B cell (primary cell): ENCODE measurements at regions of chr4 and their contacts with region 1.

Region 1: DNA sequence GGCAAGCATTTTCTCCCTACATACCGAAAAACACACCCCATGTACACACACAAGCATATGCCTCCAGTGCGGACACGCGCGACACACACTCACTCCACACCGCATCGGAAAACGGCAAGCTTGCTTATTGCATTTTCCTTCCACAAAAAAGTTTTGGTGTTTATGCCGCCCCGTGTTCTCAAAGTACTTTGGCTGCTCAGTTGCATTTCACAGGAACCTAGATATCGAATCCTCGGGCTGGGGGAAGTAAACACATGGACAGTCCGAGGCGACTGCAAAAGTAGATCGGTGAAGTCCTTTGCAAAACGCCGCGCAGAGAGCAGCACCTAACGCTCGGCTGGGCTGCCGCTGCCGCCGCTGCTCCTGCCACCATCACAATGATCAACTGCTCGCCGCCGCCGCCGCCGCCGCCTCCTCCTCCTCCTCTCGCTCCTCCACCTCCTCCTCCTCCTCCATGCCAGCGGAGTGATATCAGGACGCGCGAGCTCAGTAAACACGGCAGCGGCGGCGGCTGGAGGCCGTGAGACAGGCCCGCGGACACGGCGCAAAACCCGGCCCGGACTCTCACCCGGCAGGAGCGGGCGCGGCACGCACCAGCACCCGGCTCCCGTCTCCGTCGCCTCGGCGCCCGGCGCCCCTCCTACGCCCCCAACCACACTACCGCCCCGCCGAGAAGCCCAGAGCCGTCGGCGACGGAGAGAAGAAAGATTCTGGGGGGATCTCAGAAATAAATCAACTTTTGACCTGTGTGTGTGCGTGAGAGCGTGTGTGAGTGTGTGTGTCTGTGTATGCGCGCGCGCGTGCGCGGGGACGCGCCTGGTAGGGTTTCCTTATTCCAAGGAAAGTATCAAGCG is at the start of gene MAML3:
- DNase-seq: peak; percentile 82
- ATAC-seq: peak; percentile 18
- H3K4me3 ChIP-seq: peak within 1 kb of the TSS; percentile 54 to 88 (median 79)
- H3K4me3 Mint-ChIP-seq: peak within 1 kb of the TSS; percentile 91
- H3K27ac ChIP-seq: no peak within 1 kb of the TSS
- H3K27ac Mint-ChIP-seq: peak within 1 kb of the TSS; percentile 82
- H3K4me1 ChIP-seq: peaks cover 48 to 68% of the 10 kb centered on the region in 2 donors
- H3K4me1 Mint-ChIP-seq: peaks cover 58% of the 10 kb centered on the region
- H3K27me3 ChIP-seq: peaks cover 0 to 72% (median 28%) of the 10 kb centered on the region in 4 experiments
- H3K27me3 Mint-ChIP-seq: peaks cover 53% of the 10 kb centered on the region
- CTCF ChIP-seq: no peak
- total RNA-seq, gene MAML3: 5.3 and 6.1 TPM in 2 replicates

Region 2: GRCh38 chr4:139083956-139084803 is 1069.8 kb before region 1 on chr4:
- CTCF ChIA-PET with region 1: no interaction called
- POLR2A ChIA-PET with region 1: no interaction called
- intact Hi-C with region 1: loop called (anchors 5 kb)
- DNase-seq: peak; percentile 92
- ATAC-seq: peak; percentile 62
- H3K4me3 ChIP-seq: peak overlapping the region; percentile 79 to 98 (median 97)
- H3K4me3 Mint-ChIP-seq: peak overlapping the region; percentile 87
- H3K27ac ChIP-seq: peak overlapping the region; percentile 89 to 93
- H3K27ac Mint-ChIP-seq: peak overlapping the region; percentile 94
- H3K4me1 ChIP-seq: peaks cover 14 to 23% of the 10 kb centered on the region in 2 donors
- H3K4me1 Mint-ChIP-seq: peaks cover 36% of the 10 kb centered on the region
- H3K27me3 ChIP-seq: no peaks in the 10 kb centered on the region
- H3K27me3 Mint-ChIP-seq: no peaks in the 10 kb centered on the region
- CTCF ChIP-seq: peak; percentile 42

Region 3: DNA sequence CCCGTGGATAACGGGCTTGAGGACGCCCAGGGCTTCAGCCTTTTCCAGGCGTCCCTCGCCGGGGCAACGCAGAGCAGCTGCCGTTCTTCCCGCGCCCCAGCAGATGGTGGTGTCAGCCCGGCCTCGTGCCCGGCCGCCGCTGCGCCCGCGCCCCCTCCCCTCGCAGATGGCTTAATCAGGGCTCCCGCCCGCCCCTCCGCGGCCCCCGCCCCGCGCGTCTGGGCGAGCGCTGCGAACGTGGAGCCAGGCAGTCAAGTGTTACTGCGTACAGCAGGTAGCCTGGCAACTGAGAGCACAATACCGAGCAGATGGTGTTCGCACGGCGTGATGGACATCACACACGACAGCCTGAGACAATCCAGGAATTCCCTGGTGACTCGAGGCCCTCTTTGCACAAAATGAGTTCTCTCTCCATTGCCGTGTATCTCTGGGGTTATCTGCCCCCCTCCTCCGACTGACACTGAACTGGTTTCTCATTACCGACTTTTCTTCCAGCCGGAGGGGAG is 419.0 kb before region 1 on chr4:
- CTCF ChIA-PET with region 1: no interaction called
- POLR2A ChIA-PET with region 1: no interaction called
- intact Hi-C with region 1: loop called (anchors 2 kb)
- DNase-seq: peak; percentile 86
- ATAC-seq: peak; percentile 84
- H3K4me3 ChIP-seq: peak overlapping the region; percentile 33 to 78 (median 51)
- H3K4me3 Mint-ChIP-seq: peak overlapping the region; percentile 86
- H3K27ac ChIP-seq: peak overlapping the region in 1 of 2 donors; percentile 48
- H3K27ac Mint-ChIP-seq: no peak overlapping the region
- H3K4me1 ChIP-seq: peaks cover 17 to 23% of the 10 kb centered on the region in 2 donors
- H3K4me1 Mint-ChIP-seq: peaks cover 17% of the 10 kb centered on the region
- H3K27me3 ChIP-seq: peaks cover 0 to 27% (median 19%) of the 10 kb centered on the region in 4 experiments
- H3K27me3 Mint-ChIP-seq: peaks cover 35% of the 10 kb centered on the region
- CTCF ChIP-seq: peak; percentile 72

Region 4: GRCh38 chr4:139783741-139784484 is 370.0 kb before region 1 on chr4:
- CTCF ChIA-PET with region 1: no interaction called
- POLR2A ChIA-PET with region 1: no interaction called
- intact Hi-C with region 1: no loop called
- DNase-seq: no peak
- ATAC-seq: no peak
- H3K4me3 ChIP-seq: no peak overlapping the region
- H3K4me3 Mint-ChIP-seq: no peak overlapping the region
- H3K27ac ChIP-seq: no peak overlapping the region
- H3K27ac Mint-ChIP-seq: no peak overlapping the region
- H3K4me1 ChIP-seq: no peaks in the 10 kb centered on the region
- H3K4me1 Mint-ChIP-seq: peaks cover 5% of the 10 kb centered on the region
- H3K27me3 ChIP-seq: peaks cover 0 to 3% (median 0%) of the 10 kb centered on the region in 4 experiments
- H3K27me3 Mint-ChIP-seq: peaks cover 3% of the 10 kb centered on the region
- CTCF ChIP-seq: no peak

Region 5: GRCh38 chr4:139887962-139888735 is 265.8 kb before region 1 on chr4:
- CTCF ChIA-PET with region 1: no interaction called
- POLR2A ChIA-PET with region 1: no interaction called
- intact Hi-C with region 1: no loop called
- DNase-seq: no peak
- ATAC-seq: no peak
- H3K4me3 ChIP-seq: no peak overlapping the region
- H3K4me3 Mint-ChIP-seq: no peak overlapping the region
- H3K27ac ChIP-seq: no peak overlapping the region
- H3K27ac Mint-ChIP-seq: no peak overlapping the region
- H3K4me1 ChIP-seq: no peaks in the 10 kb centered on the region
- H3K4me1 Mint-ChIP-seq: peaks cover 18% of the 10 kb centered on the region
- H3K27me3 ChIP-seq: no peaks in the 10 kb centered on the region
- H3K27me3 Mint-ChIP-seq: no peaks in the 10 kb centered on the region
- CTCF ChIP-seq: no peak

Region 6: GRCh38 chr4:140095694-140096482 is 58.1 kb before region 1 on chr4:
- CTCF ChIA-PET with region 1: no interaction called
- POLR2A ChIA-PET with region 1: no interaction called
- intact Hi-C with region 1: loop called (anchors 2 kb)
- DNase-seq: peak; percentile 34
- ATAC-seq: peak; percentile 46
- H3K4me3 ChIP-seq: peak overlapping the region in 4 of 5 experiments; percentile 1 to 35 (median 22)
- H3K4me3 Mint-ChIP-seq: peak overlapping the region; percentile 51
- H3K27ac ChIP-seq: peak overlapping the region; percentile 43 to 63
- H3K27ac Mint-ChIP-seq: peak overlapping the region; percentile 43
- H3K4me1 ChIP-seq: peaks cover 63 to 66% of the 10 kb centered on the region in 2 donors
- H3K4me1 Mint-ChIP-seq: peaks cover 76% of the 10 kb centered on the region
- H3K27me3 ChIP-seq: no peaks in the 10 kb centered on the region
- H3K27me3 Mint-ChIP-seq: peaks cover 23% of the 10 kb centered on the region
- CTCF ChIP-seq: no peak

Region 7: DNA sequence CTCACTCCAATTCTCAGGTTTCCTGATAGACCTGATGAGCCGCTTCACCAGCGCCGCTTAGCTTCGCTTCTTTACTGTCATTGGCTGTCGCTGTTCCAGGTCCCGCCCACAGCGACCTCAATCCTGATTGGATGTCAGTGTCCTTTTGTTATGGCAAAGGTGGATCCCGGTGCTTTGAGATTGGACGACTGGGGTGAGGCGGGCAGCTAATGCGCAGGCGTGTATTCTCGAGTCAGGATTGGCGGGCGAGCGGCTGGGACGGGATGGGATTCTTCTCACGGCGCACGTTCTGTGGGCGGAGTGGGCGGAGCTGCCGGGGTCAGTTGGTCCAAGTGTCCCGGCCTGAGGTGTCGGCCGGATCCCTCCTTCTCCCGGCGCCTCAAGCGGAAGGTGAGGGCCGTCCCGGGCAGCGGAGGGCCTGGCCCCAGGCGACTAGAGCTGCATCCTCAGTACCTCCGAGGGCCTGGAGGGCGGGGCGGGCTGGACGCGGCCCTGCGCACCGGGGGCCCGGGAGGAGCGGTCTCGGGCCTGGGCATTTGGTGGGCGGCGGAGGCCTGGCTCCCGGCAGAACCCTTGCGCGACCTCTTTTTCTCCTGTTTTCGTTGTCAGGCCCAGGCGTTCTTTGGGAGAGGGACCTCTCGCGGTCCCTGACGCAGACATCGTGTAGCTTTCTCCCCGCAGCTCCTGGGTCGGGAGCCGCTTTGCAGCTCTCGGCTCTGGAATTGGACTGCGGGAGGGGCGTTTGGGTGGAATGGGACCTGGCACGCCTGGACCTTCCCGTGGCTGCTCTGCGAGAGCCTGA is 219.6 kb after region 1 on chr4 and contains the start of gene SCOC:
- CTCF ChIA-PET with region 1: no interaction called
- POLR2A ChIA-PET with region 1: no interaction called
- intact Hi-C with region 1: loop called (anchors 5 kb)
- DNase-seq: peak; percentile 97
- ATAC-seq: peak; percentile 95
- H3K4me3 ChIP-seq: peak within 1 kb of the TSS; percentile 54 to 98 (median 93)
- H3K4me3 Mint-ChIP-seq: peak within 1 kb of the TSS; percentile 86
- H3K27ac ChIP-seq: peak within 1 kb of the TSS; percentile 74 to 86
- H3K27ac Mint-ChIP-seq: peak within 1 kb of the TSS; percentile 64
- H3K4me1 ChIP-seq: peaks cover 14 to 16% of the 10 kb centered on the region in 2 donors
- H3K4me1 Mint-ChIP-seq: peaks cover 25% of the 10 kb centered on the region
- H3K27me3 ChIP-seq: no peaks in the 10 kb centered on the region
- H3K27me3 Mint-ChIP-seq: no peaks in the 10 kb centered on the region
- CTCF ChIP-seq: no peak
- total RNA-seq, gene SCOC: 18.4 and 19.2 TPM in 2 replicates

Region 8: DNA sequence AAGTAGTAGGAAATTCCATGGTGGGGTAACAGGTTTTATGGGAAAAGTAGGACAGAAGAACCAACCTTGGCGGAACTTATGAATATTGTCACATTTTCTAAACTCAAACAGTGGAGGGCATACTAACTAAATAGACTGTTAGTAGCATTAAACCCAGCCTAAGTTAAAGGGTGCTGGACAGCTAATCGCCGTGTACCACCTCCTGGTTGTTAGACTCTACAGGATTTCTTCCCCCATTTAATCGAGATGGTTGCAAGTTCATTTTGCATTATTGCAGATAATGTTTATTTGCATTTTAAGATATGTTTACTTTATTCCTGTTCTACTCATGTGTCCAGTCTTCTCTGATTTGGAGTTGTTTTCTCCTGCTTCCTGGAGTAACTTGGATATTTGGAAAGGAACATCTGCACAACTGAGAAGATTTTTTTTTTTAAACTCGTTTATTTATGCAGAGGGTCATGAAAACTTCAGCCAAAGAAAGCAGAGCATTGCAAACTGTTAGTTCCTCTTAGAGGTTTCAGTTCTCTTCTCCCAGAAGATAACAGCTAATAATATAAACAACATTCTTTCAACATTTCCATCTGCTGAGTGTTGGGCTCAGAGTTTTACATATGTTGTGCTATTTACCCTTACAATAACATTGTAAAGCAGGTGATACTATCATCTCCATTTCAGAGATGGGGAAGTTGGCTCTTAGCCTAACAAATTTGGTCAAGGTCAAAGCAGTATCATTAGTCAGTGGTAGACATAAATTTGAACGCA is 653.7 kb after region 1 on chr4:
- CTCF ChIA-PET with region 1: no interaction called
- POLR2A ChIA-PET with region 1: no interaction called
- intact Hi-C with region 1: loop called (anchors 5 kb)
- DNase-seq: peak; percentile 80
- ATAC-seq: peak; percentile 84
- H3K4me3 ChIP-seq: peak overlapping the region in 2 of 5 experiments; percentile 10 to 50
- H3K4me3 Mint-ChIP-seq: peak overlapping the region; percentile 70
- H3K27ac ChIP-seq: peak overlapping the region; percentile 82 to 83
- H3K27ac Mint-ChIP-seq: peak overlapping the region; percentile 97
- H3K4me1 ChIP-seq: peaks cover 85 to 92% of the 10 kb centered on the region in 2 donors
- H3K4me1 Mint-ChIP-seq: peaks cover 83% of the 10 kb centered on the region
- H3K27me3 ChIP-seq: no peaks in the 10 kb centered on the region
- H3K27me3 Mint-ChIP-seq: no peaks in the 10 kb centered on the region
- CTCF ChIP-seq: no peak